ENCODE measurements at regions of chr11 and their contacts with region 1.

Region 1: GRCh38 chr11:60169264-60169915 is 13.5 kb downstream of the MS4A6A start:
- DNase-seq: peak; percentile 97
- H3K4me3 ChIP-seq: no peak overlapping the region
- H3K27ac ChIP-seq: no peak overlapping the region
- H3K4me1 ChIP-seq: peaks cover 12% of the 10 kb centered on the region
- H3K27me3 ChIP-seq: no peaks in the 10 kb centered on the region
- CTCF ChIP-seq: peak; percentile 70 to 74

Region 2: GRCh38 chr11:59822989-59823566 is 346.3 kb before region 1 on chr11:
- CTCF ChIA-PET with region 1: no interaction called
- dilution Hi-C with region 1: no loop called
- in situ Hi-C with region 1: no loop called
- intact Hi-C with region 1: loop called (anchors 1 kb)
- DNase-seq: peak; percentile 65
- H3K4me3 ChIP-seq: no peak overlapping the region
- H3K27ac ChIP-seq: no peak overlapping the region
- H3K4me1 ChIP-seq: no peaks in the 10 kb centered on the region
- H3K27me3 ChIP-seq: no peaks in the 10 kb centered on the region
- CTCF ChIP-seq: peak; percentile 71 to 73

Region 3: GRCh38 chr11:60130496-60130895 is 38.9 kb before region 1 on chr11:
- CTCF ChIA-PET with region 1: no interaction called
- dilution Hi-C with region 1: no loop called
- in situ Hi-C with region 1: no loop called
- intact Hi-C with region 1: loop called (anchors 5 kb)
- DNase-seq: peak; percentile 57
- H3K4me3 ChIP-seq: no peak overlapping the region
- H3K27ac ChIP-seq: no peak overlapping the region
- H3K4me1 ChIP-seq: peaks cover 23% of the 10 kb centered on the region
- H3K27me3 ChIP-seq: no peaks in the 10 kb centered on the region
- CTCF ChIP-seq: peak; percentile 47 to 55

Region 4: DNA sequence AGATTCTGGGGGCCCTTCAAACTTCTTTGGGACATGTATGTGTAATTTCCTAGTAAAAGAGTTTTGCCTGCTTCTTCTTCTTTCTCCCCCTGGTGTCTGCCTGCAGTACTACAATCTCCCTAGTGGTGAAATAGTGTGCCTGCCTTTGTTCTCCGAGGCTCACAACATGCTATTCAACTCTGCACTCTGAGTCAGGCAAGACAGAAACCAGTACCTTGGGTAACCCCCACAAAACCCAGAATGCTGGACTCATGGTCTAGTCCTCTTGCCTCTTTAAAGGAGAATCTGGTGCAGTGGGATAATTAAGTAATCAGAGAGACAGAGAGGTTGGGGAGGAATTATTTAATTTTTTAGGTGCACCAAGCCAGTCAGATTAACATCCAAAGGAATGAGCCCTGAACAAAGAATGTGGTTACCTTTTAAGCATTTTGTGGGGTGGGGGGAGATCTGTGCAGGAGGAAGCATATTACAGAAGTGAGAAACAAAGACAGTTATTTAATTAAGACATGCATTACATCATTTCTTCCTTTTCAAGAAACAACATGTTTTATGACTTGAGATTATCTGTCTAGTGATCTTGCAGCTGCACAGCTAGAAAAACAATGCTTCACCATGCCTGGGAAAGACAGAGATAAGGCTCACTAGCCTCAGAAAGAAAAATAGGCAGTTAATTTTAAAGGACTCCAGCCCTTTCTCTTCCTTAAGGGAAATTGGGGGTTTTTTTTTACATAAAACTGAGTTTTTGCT is 24.5 kb after region 1 on chr11:
- CTCF ChIA-PET with region 1: no interaction called
- dilution Hi-C with region 1: no loop called
- in situ Hi-C with region 1: no loop called
- intact Hi-C with region 1: loop called (anchors 1 kb)
- DNase-seq: peak; percentile 89
- H3K4me3 ChIP-seq: no peak overlapping the region
- H3K27ac ChIP-seq: no peak overlapping the region
- H3K4me1 ChIP-seq: peaks cover 4% of the 10 kb centered on the region
- H3K27me3 ChIP-seq: no peaks in the 10 kb centered on the region
- CTCF ChIP-seq: peak; percentile 99

Region 5: GRCh38 chr11:60251485-60252212 is 82.3 kb after region 1 on chr11:
- CTCF ChIA-PET with region 1: interaction called, 14 read pairs
- dilution Hi-C with region 1: no loop called
- in situ Hi-C with region 1: no loop called
- intact Hi-C with region 1: loop called (anchors 1 kb)
- DNase-seq: peak; percentile 34
- H3K4me3 ChIP-seq: no peak overlapping the region
- H3K27ac ChIP-seq: no peak overlapping the region
- H3K4me1 ChIP-seq: no peaks in the 10 kb centered on the region
- H3K27me3 ChIP-seq: peaks cover 8% of the 10 kb centered on the region
- CTCF ChIP-seq: peak; percentile 48 to 67

Region 6: GRCh38 chr11:60318726-60319125 is 149.3 kb after region 1 on chr11:
- CTCF ChIA-PET with region 1: no interaction called
- dilution Hi-C with region 1: no loop called
- in situ Hi-C with region 1: no loop called
- intact Hi-C with region 1: loop called (anchors 5 kb)
- DNase-seq: peak; percentile 52
- H3K4me3 ChIP-seq: no peak overlapping the region
- H3K27ac ChIP-seq: no peak overlapping the region
- H3K4me1 ChIP-seq: no peaks in the 10 kb centered on the region
- H3K27me3 ChIP-seq: peaks cover 4% of the 10 kb centered on the region
- CTCF ChIP-seq: peak in 1 of 2 donors; percentile 24